ENCODE measurements at regions of chr5 and their contacts with region 1.

Region 1: GRCh38 chr5:80711938-80712337 is 57.2 kb upstream of the DHFR start:
- DNase-seq: peak; percentile 44
- ATAC-seq: peak; percentile 94
- H3K4me3 ChIP-seq: no peak overlapping the region
- H3K27ac ChIP-seq: no peak overlapping the region
- H3K4me1 ChIP-seq: peaks cover 31% of the 10 kb centered on the region
- H3K27me3 ChIP-seq: no peaks in the 10 kb centered on the region
- CTCF ChIP-seq: peak; percentile 74
- EP300 ChIP-seq: no peak
- POLR2A ChIP-seq: no peak
- RAD21 ChIP-seq: no peak; the same call in 1 of the 2 replicates

Region 2: DNA sequence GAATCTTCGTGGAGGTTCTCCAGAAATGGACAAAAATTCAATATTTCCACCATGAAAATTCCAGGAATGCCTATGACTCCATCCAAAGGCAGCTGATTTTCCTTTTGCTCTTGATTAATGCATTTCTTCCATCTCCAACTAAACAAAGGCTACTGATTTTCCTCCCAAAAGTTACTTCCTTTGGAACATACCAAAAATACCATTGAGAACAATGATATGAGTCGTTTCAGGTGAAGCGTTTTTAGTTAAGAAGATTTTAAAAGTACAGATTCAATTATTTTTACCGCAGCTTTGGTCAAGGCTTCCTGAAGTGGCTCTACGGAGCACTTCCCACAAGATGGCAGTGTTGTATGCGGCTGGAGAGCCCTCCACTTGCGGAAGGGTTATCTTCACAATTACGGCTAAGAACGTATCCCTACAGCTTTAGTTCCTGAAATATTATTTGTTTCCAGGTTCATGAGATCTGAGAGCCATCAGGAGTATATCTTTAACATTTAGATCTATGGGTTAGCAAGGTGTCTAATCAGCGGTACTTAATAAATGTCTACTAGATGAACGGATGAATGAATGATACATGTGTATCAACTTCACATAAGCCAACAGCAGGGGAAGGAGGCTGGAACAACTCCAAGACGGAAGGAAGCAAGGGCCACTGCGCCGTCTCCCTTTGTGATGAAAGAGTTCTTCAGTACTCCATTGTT is 1690.9 kb before region 1 on chr5:
- CTCF ChIA-PET with region 1: no interaction called
- POLR2A ChIA-PET with region 1: no interaction called
- in situ Hi-C with region 1: no loop called
- intact Hi-C with region 1: no loop called
- DNase-seq: peak; percentile 27
- ATAC-seq: peak; percentile 61
- H3K4me3 ChIP-seq: no peak overlapping the region
- H3K27ac ChIP-seq: no peak overlapping the region
- H3K4me1 ChIP-seq: peaks cover 33% of the 10 kb centered on the region
- H3K27me3 ChIP-seq: no peaks in the 10 kb centered on the region
- CTCF ChIP-seq: peak; percentile 83
- EP300 ChIP-seq: no peak
- POLR2A ChIP-seq: no peak
- RAD21 ChIP-seq: peak; percentile 89

Region 3: GRCh38 chr5:80686757-80687156 is 25.2 kb before region 1 on chr5:
- CTCF ChIA-PET with region 1: no interaction called
- POLR2A ChIA-PET with region 1: no interaction called
- in situ Hi-C with region 1: no loop called
- intact Hi-C with region 1: no loop called
- DNase-seq: peak; percentile 6
- ATAC-seq: no peak
- H3K4me3 ChIP-seq: no peak overlapping the region
- H3K27ac ChIP-seq: no peak overlapping the region
- H3K4me1 ChIP-seq: no peaks in the 10 kb centered on the region
- H3K27me3 ChIP-seq: no peaks in the 10 kb centered on the region
- CTCF ChIP-seq: no peak
- EP300 ChIP-seq: no peak
- POLR2A ChIP-seq: no peak
- RAD21 ChIP-seq: no peak

Region 4: GRCh38 chr5:80701597-80701996 is 10.3 kb before region 1 on chr5:
- CTCF ChIA-PET with region 1: no interaction called
- POLR2A ChIA-PET with region 1: no interaction called
- in situ Hi-C with region 1: no loop called
- intact Hi-C with region 1: no loop called
- DNase-seq: no peak
- ATAC-seq: no peak
- H3K4me3 ChIP-seq: no peak overlapping the region
- H3K27ac ChIP-seq: no peak overlapping the region
- H3K4me1 ChIP-seq: peaks cover 8% of the 10 kb centered on the region; the same call in 1 of the 2 replicates
- H3K27me3 ChIP-seq: no peaks in the 10 kb centered on the region
- CTCF ChIP-seq: no peak
- EP300 ChIP-seq: no peak
- POLR2A ChIP-seq: no peak
- RAD21 ChIP-seq: no peak

Region 5: GRCh38 chr5:80935811-80936385 is 224.0 kb after region 1 on chr5:
- CTCF ChIA-PET with region 1: no interaction called
- POLR2A ChIA-PET with region 1: no interaction called
- in situ Hi-C with region 1: no loop called
- intact Hi-C with region 1: loop called (anchors 1 kb)
- DNase-seq: peak; percentile 16
- ATAC-seq: peak; percentile 79
- H3K4me3 ChIP-seq: no peak overlapping the region
- H3K27ac ChIP-seq: no peak overlapping the region
- H3K4me1 ChIP-seq: no peaks in the 10 kb centered on the region
- H3K27me3 ChIP-seq: no peaks in the 10 kb centered on the region
- CTCF ChIP-seq: peak; percentile 56
- EP300 ChIP-seq: no peak
- POLR2A ChIP-seq: no peak
- RAD21 ChIP-seq: peak; percentile 23; the same call in 1 of the 2 replicates

Region 6: GRCh38 chr5:80960531-80961375 is 248.8 kb after region 1 on chr5:
- CTCF ChIA-PET with region 1: no interaction called
- POLR2A ChIA-PET with region 1: no interaction called
- in situ Hi-C with region 1: no loop called
- intact Hi-C with region 1: loop called (anchors 2 kb)
- DNase-seq: peak; percentile 18
- ATAC-seq: peak; percentile 78
- H3K4me3 ChIP-seq: peak overlapping the region; percentile 84 to 98 (median 93)
- H3K27ac ChIP-seq: peak overlapping the region; percentile 75
- H3K4me1 ChIP-seq: peaks cover 59% of the 10 kb centered on the region
- H3K27me3 ChIP-seq: peaks cover 0 to 3% of the 10 kb centered on the region in 2 experiments; a peak in 1 of 5 replicates
- CTCF ChIP-seq: peak; percentile 69
- EP300 ChIP-seq: no peak
- POLR2A ChIP-seq: peak in 1 of 2 experiments; percentile 19; a peak in 1 of 4 replicates
- RAD21 ChIP-seq: peak; percentile 65; the same call in 1 of the 2 replicates

Region 7: GRCh38 chr5:81105261-81105877 is 393.4 kb after region 1 on chr5:
- CTCF ChIA-PET with region 1: interaction called, 9 read pairs
- POLR2A ChIA-PET with region 1: no interaction called
- in situ Hi-C with region 1: no loop called
- intact Hi-C with region 1: loop called (anchors 1 kb)
- DNase-seq: no peak
- ATAC-seq: no peak
- H3K4me3 ChIP-seq: no peak overlapping the region
- H3K27ac ChIP-seq: no peak overlapping the region
- H3K4me1 ChIP-seq: no peaks in the 10 kb centered on the region
- H3K27me3 ChIP-seq: no peaks in the 10 kb centered on the region
- CTCF ChIP-seq: no peak
- EP300 ChIP-seq: no peak
- POLR2A ChIP-seq: no peak
- RAD21 ChIP-seq: no peak

Region 8: GRCh38 chr5:81165493-81166119 is 453.7 kb after region 1 on chr5:
- CTCF ChIA-PET with region 1: interaction called, 4 read pairs
- POLR2A ChIA-PET with region 1: no interaction called
- in situ Hi-C with region 1: no loop called
- intact Hi-C with region 1: loop called (anchors 1 kb)
- DNase-seq: peak; percentile 67
- ATAC-seq: peak; percentile 97
- H3K4me3 ChIP-seq: no peak overlapping the region
- H3K27ac ChIP-seq: no peak overlapping the region
- H3K4me1 ChIP-seq: no peaks in the 10 kb centered on the region
- H3K27me3 ChIP-seq: no peaks in the 10 kb centered on the region
- CTCF ChIP-seq: peak; percentile 82
- EP300 ChIP-seq: no peak
- POLR2A ChIP-seq: no peak
- RAD21 ChIP-seq: peak; percentile 57; the same call in 1 of the 2 replicates

Region 9: GRCh38 chr5:81194633-81195333 is 482.8 kb after region 1 on chr5:
- CTCF ChIA-PET with region 1: no interaction called
- POLR2A ChIA-PET with region 1: no interaction called
- in situ Hi-C with region 1: loop called (anchors 25 kb)
- intact Hi-C with region 1: loop called (anchors 10 kb)
- DNase-seq: peak; percentile 5
- ATAC-seq: peak; percentile 90
- H3K4me3 ChIP-seq: no peak overlapping the region
- H3K27ac ChIP-seq: no peak overlapping the region
- H3K4me1 ChIP-seq: no peaks in the 10 kb centered on the region
- H3K27me3 ChIP-seq: no peaks in the 10 kb centered on the region
- CTCF ChIP-seq: peak; percentile 79
- EP300 ChIP-seq: no peak
- POLR2A ChIP-seq: no peak
- RAD21 ChIP-seq: peak; percentile 56